Gastrocnemius medialis (tissue), 4 donors: ENCODE measurements at regions of chr11 and their contacts with region 1.

Region 1: GRCh38 chr11:113289431-113290187 is 24.8 kb upstream of the TTC12 start:
- DNase-seq: peak; percentile 18 to 26
- ATAC-seq: peak; percentile 66 to 80
- H3K4me3 ChIP-seq: no peak overlapping the region
- H3K27ac ChIP-seq: no peak overlapping the region
- H3K4me1 ChIP-seq: no peaks in the 10 kb centered on the region
- H3K27me3 ChIP-seq: peaks cover 0 to 4% (median under 1%) of the 10 kb centered on the region in 3 donors
- CTCF ChIP-seq: peak; percentile 76 to 92 (median 83)
- POLR2A ChIP-seq: no peak

Region 2: DNA sequence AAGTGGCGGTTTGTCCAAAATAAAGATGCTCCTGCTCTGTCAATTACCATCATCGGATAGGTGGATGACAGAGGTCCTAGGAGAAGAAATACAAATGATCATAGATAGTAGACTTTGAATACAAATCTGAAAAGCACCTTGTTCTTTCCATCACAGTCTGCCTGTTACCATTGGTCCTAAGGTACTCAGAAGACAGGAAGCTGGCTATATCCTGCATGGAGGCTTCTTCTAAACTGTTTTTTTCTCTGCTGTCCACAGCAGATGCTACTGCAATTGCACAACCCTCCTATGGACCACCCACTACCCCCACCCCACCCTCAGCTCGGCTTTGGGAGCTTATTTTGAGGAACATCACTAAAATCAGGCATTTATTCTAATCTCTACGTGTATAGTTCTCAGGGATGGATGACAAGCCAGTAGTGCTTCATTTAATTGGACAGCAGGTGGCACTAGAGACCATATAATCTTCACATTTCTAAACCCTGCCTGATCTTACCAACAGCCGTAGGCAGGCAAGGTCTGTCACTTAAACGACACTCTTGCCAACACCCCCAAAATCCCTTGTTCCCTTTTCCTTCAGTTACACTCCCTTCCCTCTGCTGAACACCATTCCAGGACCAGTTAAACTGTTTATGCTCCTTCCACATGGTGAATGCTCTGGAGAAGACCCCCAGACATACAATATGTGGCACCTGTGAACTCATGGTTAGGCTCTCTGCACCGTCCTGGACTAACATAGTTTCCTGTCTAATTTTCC is 1070.0 kb before region 1 on chr11:
- in situ Hi-C with region 1: loop called in 2 of 4 experiments (anchors 10 to 25 kb)
- intact Hi-C with region 1: no loop called
- DNase-seq: peak; percentile 13 to 21
- ATAC-seq: peak; percentile 92 to 97
- H3K4me3 ChIP-seq: no peak overlapping the region
- H3K27ac ChIP-seq: no peak overlapping the region
- H3K4me1 ChIP-seq: no peaks in the 10 kb centered on the region
- H3K27me3 ChIP-seq: no peaks in the 10 kb centered on the region
- CTCF ChIP-seq: peak; percentile 83 to 86 (median 85)
- POLR2A ChIP-seq: no peak

Region 3: DNA sequence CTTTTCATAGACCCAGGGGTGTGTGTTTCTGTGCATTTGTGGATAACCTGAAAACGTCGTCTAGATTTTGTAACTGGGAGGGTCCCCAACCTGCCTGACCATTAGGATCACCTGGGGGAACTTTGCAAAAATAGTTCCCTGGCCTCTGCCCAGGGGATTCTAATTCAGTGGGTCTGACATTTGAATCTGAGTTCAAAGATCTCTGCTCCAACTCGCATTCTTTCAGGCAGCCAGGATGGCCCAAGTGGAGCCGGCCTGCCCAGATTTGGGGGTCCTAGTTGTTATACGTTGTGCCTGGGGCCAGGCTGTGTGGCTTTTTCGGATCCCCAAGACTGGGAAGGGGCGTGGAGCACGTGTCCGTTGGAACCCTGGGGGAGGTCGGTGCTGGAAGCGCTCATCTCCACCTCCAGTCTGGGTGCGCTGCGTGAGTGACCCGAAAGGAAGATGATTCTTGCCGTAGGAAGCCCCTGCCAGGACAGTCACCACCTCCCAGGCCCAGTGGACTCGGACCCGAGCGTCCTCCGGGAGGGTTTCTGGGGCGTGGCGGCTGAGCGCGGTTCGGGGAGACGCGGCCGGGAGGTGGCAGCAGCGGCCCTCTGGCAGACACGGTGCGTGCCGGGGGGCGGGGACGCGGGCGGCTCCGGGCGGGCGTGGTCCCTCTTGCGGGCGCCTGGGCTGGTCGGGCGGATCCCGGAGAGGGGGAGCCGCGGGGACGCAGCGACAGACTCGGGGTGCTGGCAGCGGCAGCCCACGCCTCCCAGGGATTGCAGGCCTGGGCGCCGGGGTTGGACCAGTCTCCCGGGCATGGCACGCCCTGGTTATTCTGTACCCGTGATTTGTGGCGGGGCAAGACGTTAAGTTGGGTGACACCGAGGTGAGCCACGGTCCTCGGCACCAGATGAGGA is 999.8 kb before region 1 on chr11:
- in situ Hi-C with region 1: loop called (anchors 10 to 25 kb)
- intact Hi-C with region 1: loop called (anchors 2 kb)
- DNase-seq: peak; percentile 63 to 67
- ATAC-seq: peak; percentile 63 to 70
- H3K4me3 ChIP-seq: peak overlapping the region; percentile 61 to 77 (median 68)
- H3K27ac ChIP-seq: peak overlapping the region; percentile 71 to 85 (median 82)
- H3K4me1 ChIP-seq: peaks cover 42 to 44% of the 10 kb centered on the region in 2 donors
- H3K27me3 ChIP-seq: no peaks in the 10 kb centered on the region
- CTCF ChIP-seq: peak; percentile 79 to 96 (median 84)
- POLR2A ChIP-seq: peak; percentile 23 to 40

Region 4: DNA sequence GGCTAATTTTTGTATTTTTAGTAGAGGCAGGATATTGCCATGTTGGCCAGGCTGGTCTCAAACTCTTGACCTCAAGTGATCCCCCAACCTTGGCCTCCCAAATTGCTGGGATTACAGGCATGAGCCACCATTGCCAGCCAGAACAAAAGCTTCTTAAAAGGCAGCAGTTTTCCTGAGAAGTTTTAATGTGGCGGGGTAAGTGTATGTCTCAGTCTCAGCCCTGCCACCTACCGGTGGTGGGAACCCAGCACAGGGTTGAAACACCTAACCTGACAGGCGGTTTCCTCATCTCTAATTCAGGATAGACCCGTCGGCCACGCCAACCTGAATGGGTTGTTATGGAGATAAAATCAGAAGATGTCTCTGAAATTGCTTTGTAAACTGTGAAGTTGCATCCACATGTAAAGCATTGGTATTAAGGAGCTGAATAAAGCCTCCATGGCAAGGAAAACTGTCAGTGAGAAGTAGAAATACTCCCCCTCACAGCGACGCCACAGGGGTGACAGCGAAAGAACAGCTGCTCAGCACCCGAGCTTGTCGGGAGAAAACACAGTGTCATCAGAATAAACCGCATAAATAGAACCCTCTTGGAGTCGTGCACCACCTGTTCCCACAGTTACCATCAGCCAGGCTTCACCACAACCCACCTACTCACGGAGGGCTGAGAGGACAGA is 494.3 kb before region 1 on chr11:
- in situ Hi-C with region 1: loop called in 1 of 4 experiments (anchors 25 kb)
- intact Hi-C with region 1: no loop called
- DNase-seq: peak in 1 of 2 donors; percentile 64
- ATAC-seq: peak; percentile 76 to 79
- H3K4me3 ChIP-seq: no peak overlapping the region
- H3K27ac ChIP-seq: peak overlapping the region in 2 of 4 donors; percentile 44 to 55
- H3K4me1 ChIP-seq: peaks cover 8 to 24% of the 10 kb centered on the region in 2 donors
- H3K27me3 ChIP-seq: no peaks in the 10 kb centered on the region
- CTCF ChIP-seq: peak; percentile 67 to 82 (median 70)
- POLR2A ChIP-seq: no peak

Region 5: GRCh38 chr11:112856591-112856990 is 433.0 kb before region 1 on chr11:
- in situ Hi-C with region 1: no loop called
- intact Hi-C with region 1: no loop called
- DNase-seq: no peak
- ATAC-seq: no peak
- H3K4me3 ChIP-seq: no peak overlapping the region
- H3K27ac ChIP-seq: no peak overlapping the region
- H3K4me1 ChIP-seq: peaks cover 5 to 20% of the 10 kb centered on the region in 2 donors
- H3K27me3 ChIP-seq: no peaks in the 10 kb centered on the region
- CTCF ChIP-seq: no peak
- POLR2A ChIP-seq: no peak

Region 6: GRCh38 chr11:113189909-113190667 is 99.5 kb before region 1 on chr11:
- in situ Hi-C with region 1: loop called in 1 of 4 experiments (anchors 25 kb)
- intact Hi-C with region 1: no loop called
- DNase-seq: peak; percentile 18 to 48
- ATAC-seq: peak; percentile 29 to 55
- H3K4me3 ChIP-seq: no peak overlapping the region
- H3K27ac ChIP-seq: peak overlapping the region in 3 of 4 donors; percentile 38 to 59 (median 56)
- H3K4me1 ChIP-seq: peaks cover 28 to 65% of the 10 kb centered on the region in 2 donors
- H3K27me3 ChIP-seq: no peaks in the 10 kb centered on the region
- CTCF ChIP-seq: no peak
- POLR2A ChIP-seq: no peak